HepG2 (cell line): ENCODE measurements at regions of chr1 and their contacts with region 1.

Region 1: GRCh38 chr1:234875953-234876855 is 252.4 kb downstream of the TOMM20 start:
- DNase-seq: peak; percentile 98
- ATAC-seq: peak; percentile 74
- H3K4me3 ChIP-seq: peak overlapping the region; percentile 36 to 71 (median 49); a peak in 5 of 6 replicates
- H3K27ac ChIP-seq: peak overlapping the region; percentile 98
- H3K4me1 ChIP-seq: peaks cover 93% of the 10 kb centered on the region
- H3K27me3 ChIP-seq: no peaks in the 10 kb centered on the region; a peak in 1 of 5 replicates
- CTCF ChIP-seq: no peak; the same call in 1 of the 2 replicates
- EP300 ChIP-seq: peak; percentile 74 to 97; a peak in 3 of 4 replicates
- POLR2A ChIP-seq: peak; percentile 43 to 62; a peak in 2 of 4 replicates
- RAD21 ChIP-seq: peak; percentile 20; the same call in 1 of the 2 replicates

Region 2: DNA sequence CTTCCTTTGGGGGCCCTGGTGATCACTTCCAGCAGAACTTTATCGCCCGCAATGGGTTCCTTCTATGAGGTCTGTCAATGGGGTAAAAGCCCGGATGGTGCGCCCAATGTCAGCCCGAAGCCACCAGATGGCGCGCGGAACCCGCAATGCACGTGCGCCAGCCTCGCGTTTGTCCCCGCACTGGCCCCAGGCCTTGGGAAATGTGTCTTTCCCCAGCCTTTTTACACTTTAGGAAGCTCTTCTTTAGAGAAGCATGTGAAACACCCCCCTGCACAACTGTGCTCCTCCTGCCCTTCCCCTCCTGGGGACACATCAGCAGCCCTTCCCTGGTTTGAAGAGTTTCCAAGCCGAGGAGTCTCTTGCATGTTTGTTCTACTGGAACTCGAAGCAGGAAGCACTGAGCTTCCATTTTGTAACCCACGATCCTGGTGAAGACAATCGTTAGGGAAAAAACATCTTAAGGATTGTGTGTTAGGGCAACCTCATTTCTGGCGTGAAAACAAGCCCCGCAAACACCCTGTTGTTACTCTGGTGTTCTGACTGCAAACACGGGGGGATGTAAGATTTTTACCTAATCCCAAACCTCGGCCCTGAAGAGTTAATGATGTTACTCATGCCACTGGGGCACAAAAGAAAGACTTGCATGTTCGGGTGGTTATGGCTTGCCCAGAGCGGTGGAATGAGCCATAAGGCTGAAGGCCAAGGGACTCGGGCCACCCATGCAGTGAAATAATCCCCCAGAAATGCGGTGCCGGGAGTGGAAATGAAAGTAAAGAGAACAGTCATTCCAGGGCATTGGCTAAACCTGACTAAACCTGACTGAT is 376.9 kb before region 1 on chr1:
- CTCF ChIA-PET with region 1: no interaction called
- POLR2A ChIA-PET with region 1: interaction called, 8 read pairs
- in situ Hi-C with region 1: loop called (anchors 10 kb)
- intact Hi-C with region 1: loop called (anchors 2 kb)
- DNase-seq: peak; percentile 65
- ATAC-seq: peak; percentile 99
- H3K4me3 ChIP-seq: 0 out of 6 replicates have a peak overlapping the region, but pooled peaks of 1 of the 3 experiments have one; percentile 8
- H3K27ac ChIP-seq: peak overlapping the region; percentile 50
- H3K4me1 ChIP-seq: peaks cover 61% of the 10 kb centered on the region
- H3K27me3 ChIP-seq: no peaks in the 10 kb centered on the region
- CTCF ChIP-seq: peak; percentile 97
- EP300 ChIP-seq: no peak
- POLR2A ChIP-seq: no peak
- RAD21 ChIP-seq: peak; percentile 99

Region 3: GRCh38 chr1:234716908-234717375 is 159.3 kb before region 1 on chr1:
- CTCF ChIA-PET with region 1: interaction called, 3 read pairs
- POLR2A ChIA-PET with region 1: interaction called, 96 read pairs
- in situ Hi-C with region 1: loop called (anchors 5 kb)
- intact Hi-C with region 1: loop called (anchors 2 kb)
- DNase-seq: peak; percentile 81
- ATAC-seq: peak; percentile 62
- H3K4me3 ChIP-seq: peak overlapping the region; percentile 52 to 75 (median 62)
- H3K27ac ChIP-seq: peak overlapping the region; percentile 99
- H3K4me1 ChIP-seq: peaks cover 98% of the 10 kb centered on the region
- H3K27me3 ChIP-seq: no peaks in the 10 kb centered on the region; a peak in 1 of 5 replicates
- CTCF ChIP-seq: no peak
- EP300 ChIP-seq: no peak
- POLR2A ChIP-seq: peak; percentile 64 to 68; a peak in 3 of 4 replicates
- RAD21 ChIP-seq: no peak

Region 4: GRCh38 chr1:234823191-234824176 is 52.7 kb before region 1 on chr1:
- CTCF ChIA-PET with region 1: no interaction called
- POLR2A ChIA-PET with region 1: no interaction called
- in situ Hi-C with region 1: no loop called
- intact Hi-C with region 1: loop called (anchors 10 kb)
- DNase-seq: no peak
- ATAC-seq: no peak
- H3K4me3 ChIP-seq: no peak overlapping the region
- H3K27ac ChIP-seq: no peak overlapping the region
- H3K4me1 ChIP-seq: peaks cover 17% of the 10 kb centered on the region
- H3K27me3 ChIP-seq: no peaks in the 10 kb centered on the region
- CTCF ChIP-seq: no peak
- EP300 ChIP-seq: no peak
- POLR2A ChIP-seq: no peak
- RAD21 ChIP-seq: no peak

Region 5: GRCh38 chr1:234907940-234908405 is 31.8 kb after region 1 on chr1:
- CTCF ChIA-PET with region 1: no interaction called
- POLR2A ChIA-PET with region 1: interaction called, 10 read pairs
- in situ Hi-C with region 1: no loop called
- intact Hi-C with region 1: no loop called
- DNase-seq: peak; percentile 51
- ATAC-seq: peak; percentile 91
- H3K4me3 ChIP-seq: peak overlapping the region in 1 of 3 experiments; percentile 41; a peak in 1 of 6 replicates
- H3K27ac ChIP-seq: peak overlapping the region; percentile 34
- H3K4me1 ChIP-seq: peaks cover 50% of the 10 kb centered on the region
- H3K27me3 ChIP-seq: no peaks in the 10 kb centered on the region
- CTCF ChIP-seq: no peak
- EP300 ChIP-seq: no peak
- POLR2A ChIP-seq: no peak
- RAD21 ChIP-seq: no peak

Region 6: GRCh38 chr1:234987415-234988154 is 111.4 kb after region 1 on chr1:
- CTCF ChIA-PET with region 1: no interaction called
- POLR2A ChIA-PET with region 1: interaction called, 16 read pairs
- in situ Hi-C with region 1: no loop called
- intact Hi-C with region 1: no loop called
- DNase-seq: peak; percentile 95
- ATAC-seq: peak; percentile 97
- H3K4me3 ChIP-seq: peak overlapping the region; percentile 13 to 53 (median 24); a peak in 4 of 6 replicates
- H3K27ac ChIP-seq: peak overlapping the region; percentile 95
- H3K4me1 ChIP-seq: peaks cover 93% of the 10 kb centered on the region
- H3K27me3 ChIP-seq: no peaks in the 10 kb centered on the region
- CTCF ChIP-seq: 0 out of 2 replicates have a peak, but pooled peaks have one; percentile 9
- EP300 ChIP-seq: peak; percentile 62 to 68; a peak in 2 of 4 replicates
- POLR2A ChIP-seq: peak; percentile 55 to 80; a peak in 3 of 4 replicates
- RAD21 ChIP-seq: 0 out of 2 replicates have a peak, but pooled peaks have one; percentile 19